Activated CD4-positive, alpha-beta T cell treated with anti-CD3 and anti-CD28 coated beads, Interleukin-2, amount 10 ng/mL, durations not matched to agents 7 days and 5 days (primary cell): ENCODE measurements at regions of chr11 and their contacts with region 1.

Region 1: DNA sequence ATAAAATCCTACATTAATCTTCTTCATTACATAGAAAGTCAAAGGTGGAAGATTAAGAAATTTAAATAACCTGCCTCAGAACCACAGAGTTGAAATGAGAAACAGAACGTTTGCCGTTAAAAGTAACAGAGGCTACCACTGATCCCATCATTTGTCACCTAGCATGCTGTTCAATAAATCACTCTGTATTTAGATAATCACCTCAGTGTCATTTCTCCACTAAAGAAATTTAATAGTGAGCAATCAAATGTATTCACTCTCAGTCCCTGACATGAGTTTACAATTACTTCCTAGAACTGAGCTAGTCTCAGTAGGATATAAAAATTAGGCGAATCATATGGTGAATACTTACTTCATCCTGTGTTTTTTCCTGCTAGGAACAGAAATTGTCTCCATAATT is 169.6 kb downstream of the MSANTD4 start:
- DNase-seq: no peak
- H3K4me3 Mint-ChIP-seq: no peak overlapping the region
- H3K27ac Mint-ChIP-seq: no peak overlapping the region
- H3K4me1 Mint-ChIP-seq: no peaks in the 10 kb centered on the region
- H3K27me3 Mint-ChIP-seq: no peaks in the 10 kb centered on the region

Region 2: GRCh38 chr11:105821372-105821771 is 31.0 kb before region 1 on chr11:
- CTCF ChIA-PET with region 1: no interaction called
- POLR2A ChIA-PET with region 1: no interaction called
- DNase-seq: no peak
- H3K4me3 Mint-ChIP-seq: no peak overlapping the region
- H3K27ac Mint-ChIP-seq: no peak overlapping the region
- H3K4me1 Mint-ChIP-seq: no peaks in the 10 kb centered on the region
- H3K27me3 Mint-ChIP-seq: no peaks in the 10 kb centered on the region

Region 3: GRCh38 chr11:105838668-105839384 is 13.6 kb before region 1 on chr11:
- CTCF ChIA-PET with region 1: no interaction called
- POLR2A ChIA-PET with region 1: no interaction called
- DNase-seq: no peak
- H3K4me3 Mint-ChIP-seq: no peak overlapping the region
- H3K27ac Mint-ChIP-seq: no peak overlapping the region
- H3K4me1 Mint-ChIP-seq: no peaks in the 10 kb centered on the region
- H3K27me3 Mint-ChIP-seq: no peaks in the 10 kb centered on the region

Region 4: GRCh38 chr11:105862736-105863367 is 10.4 kb after region 1 on chr11:
- CTCF ChIA-PET with region 1: interaction called, 10 read pairs
- POLR2A ChIA-PET with region 1: no interaction called
- DNase-seq: no peak
- H3K4me3 Mint-ChIP-seq: no peak overlapping the region
- H3K27ac Mint-ChIP-seq: no peak overlapping the region
- H3K4me1 Mint-ChIP-seq: no peaks in the 10 kb centered on the region
- H3K27me3 Mint-ChIP-seq: peaks cover 2% of the 10 kb centered on the region

Region 5: GRCh38 chr11:105878510-105878909 is 26.1 kb after region 1 on chr11:
- CTCF ChIA-PET with region 1: no interaction called
- POLR2A ChIA-PET with region 1: no interaction called
- DNase-seq: no peak
- H3K4me3 Mint-ChIP-seq: no peak overlapping the region
- H3K27ac Mint-ChIP-seq: no peak overlapping the region
- H3K4me1 Mint-ChIP-seq: no peaks in the 10 kb centered on the region
- H3K27me3 Mint-ChIP-seq: no peaks in the 10 kb centered on the region

Region 6: GRCh38 chr11:105891685-105892084 is 39.3 kb after region 1 on chr11:
- CTCF ChIA-PET with region 1: no interaction called
- POLR2A ChIA-PET with region 1: no interaction called
- DNase-seq: no peak
- H3K4me3 Mint-ChIP-seq: no peak overlapping the region
- H3K27ac Mint-ChIP-seq: no peak overlapping the region
- H3K4me1 Mint-ChIP-seq: no peaks in the 10 kb centered on the region
- H3K27me3 Mint-ChIP-seq: no peaks in the 10 kb centered on the region